ENCODE measurements at regions of chr20 and their contacts with region 1.

Region 1: DNA sequence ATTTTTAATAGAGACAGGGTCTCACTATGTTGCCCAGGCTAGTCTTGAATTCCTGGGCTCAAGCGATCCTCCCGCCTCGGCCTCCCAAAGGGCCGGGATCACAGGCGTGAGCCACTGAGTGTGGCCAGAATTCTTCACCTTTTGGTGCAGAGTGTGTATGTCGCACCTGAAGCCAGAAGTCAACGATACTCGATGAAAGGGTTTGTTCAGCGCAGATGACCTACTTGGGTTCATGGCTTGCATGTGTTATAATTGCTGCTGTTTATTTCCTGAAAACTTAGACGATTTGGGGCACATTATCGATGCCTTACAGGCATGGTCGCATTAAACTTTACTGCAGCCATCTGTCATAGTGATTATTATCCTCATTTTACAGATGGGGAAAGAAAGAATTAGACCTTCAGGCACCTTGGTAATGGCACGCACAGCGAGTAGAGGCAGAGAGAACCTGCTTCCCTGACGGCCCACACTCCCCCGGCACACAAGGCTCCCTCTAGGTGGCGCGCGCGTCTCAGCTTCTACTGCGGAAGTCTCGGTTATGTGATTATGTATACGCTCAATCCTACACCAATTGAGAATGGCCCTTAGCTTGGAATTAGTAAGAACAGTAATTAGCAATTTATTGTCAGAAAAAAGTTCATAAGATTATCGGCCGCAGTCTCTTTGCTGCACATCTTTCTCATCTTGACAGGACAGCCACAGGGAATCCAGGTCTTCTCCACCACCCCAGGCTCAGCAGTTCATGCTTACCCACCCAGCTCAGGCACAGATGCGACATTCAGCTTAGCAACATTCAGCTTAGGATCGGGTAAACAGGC is 212.8 kb upstream of the PROKR2 start:
- DNase-seq: peak; percentile 88
- ATAC-seq: peak; percentile 92

Region 2: GRCh38 chr20:5788385-5788895 is 258.9 kb after region 1 on chr20:
- intact Hi-C with region 1: loop called (anchors 2 kb)
- DNase-seq: peak; percentile 71
- ATAC-seq: peak; percentile 94

Region 3: DNA sequence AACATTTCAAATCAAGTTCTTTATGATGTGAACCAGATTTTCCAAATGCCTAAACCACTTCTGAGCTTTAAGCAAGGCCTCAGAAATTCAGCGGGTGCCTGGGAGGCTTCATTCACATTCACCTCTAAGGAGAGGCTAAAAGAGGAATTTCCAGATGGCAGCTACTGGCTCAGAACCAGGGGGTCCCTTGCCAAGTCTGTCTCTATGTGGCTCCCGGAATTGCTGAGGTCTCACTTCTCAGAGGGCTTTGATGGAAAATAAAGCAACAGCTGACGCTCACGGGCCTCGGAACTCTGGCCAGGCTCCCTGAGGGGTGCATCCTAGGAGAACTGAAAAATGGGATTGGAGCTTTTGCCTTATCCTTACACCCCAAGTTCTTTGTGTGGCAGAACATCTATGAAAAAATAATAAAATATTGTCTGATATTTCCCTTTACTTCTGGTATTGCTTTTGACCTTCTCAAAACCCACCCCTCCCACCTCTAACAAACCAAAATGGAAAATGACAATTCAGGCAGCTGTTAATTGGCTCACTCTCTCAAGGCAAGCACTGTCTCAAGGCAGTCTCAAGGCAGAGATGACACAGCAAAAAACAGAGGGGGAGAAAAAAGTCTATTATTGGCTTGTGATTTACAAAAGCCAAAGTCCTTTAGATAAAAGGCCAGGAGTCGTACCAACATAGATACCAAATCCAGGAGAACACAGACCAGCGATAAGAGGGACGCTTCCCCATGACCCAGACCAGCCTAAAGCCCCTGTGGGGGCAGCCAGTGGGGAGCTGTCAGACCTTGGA is 546.1 kb after region 1 on chr20:
- intact Hi-C with region 1: loop called (anchors 5 kb)
- DNase-seq: peak; percentile 56
- ATAC-seq: peak; percentile 80

Measured in left ventricle myocardium superior (tissue), 1 donor.